Activated CD4-positive, alpha-beta T cell treated with anti-CD3 and anti-CD28 coated beads for 36 hours (primary cell): ENCODE measurements at regions of chr10 and their contacts with region 1.

Region 1: DNA sequence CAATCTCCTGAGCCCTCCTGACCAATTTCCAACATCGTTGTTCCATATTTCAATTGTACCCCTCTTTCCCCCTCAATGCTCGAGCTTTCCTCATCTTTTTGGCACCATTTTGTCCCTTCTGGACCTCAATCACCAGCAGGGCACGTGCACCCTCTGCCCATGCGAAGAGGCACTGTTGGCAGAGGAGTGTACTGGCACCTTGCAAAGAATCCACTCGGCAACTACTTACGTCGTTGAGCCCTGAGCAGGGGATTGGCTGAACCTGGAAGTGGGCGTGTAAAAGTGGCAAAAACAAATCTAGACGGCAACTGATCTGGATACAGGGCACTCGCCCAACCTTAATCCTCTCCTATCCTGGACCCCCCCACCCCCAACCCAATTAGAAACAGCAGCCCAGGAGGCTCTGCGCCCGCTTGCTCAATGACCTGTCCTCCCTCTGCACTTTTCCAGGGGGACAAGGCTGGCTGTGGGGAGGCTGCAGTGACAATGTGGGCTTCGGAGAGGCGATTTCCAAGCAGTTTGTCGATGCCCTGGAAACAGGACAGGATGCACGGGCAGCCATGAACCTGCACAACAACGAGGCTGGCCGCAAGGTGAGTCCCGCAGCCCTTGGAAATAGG is 18.8 kb downstream of the WNT8B start:
- DNase-seq: peak; percentile 92
- ATAC-seq: peak; percentile 96
- H3K4me3 Mint-ChIP-seq: peak overlapping the region; percentile 71
- H3K27ac Mint-ChIP-seq: no peak overlapping the region
- H3K4me1 Mint-ChIP-seq: peaks cover 5% of the 10 kb centered on the region
- H3K27me3 Mint-ChIP-seq: peaks cover 13% of the 10 kb centered on the region

Region 2: DNA sequence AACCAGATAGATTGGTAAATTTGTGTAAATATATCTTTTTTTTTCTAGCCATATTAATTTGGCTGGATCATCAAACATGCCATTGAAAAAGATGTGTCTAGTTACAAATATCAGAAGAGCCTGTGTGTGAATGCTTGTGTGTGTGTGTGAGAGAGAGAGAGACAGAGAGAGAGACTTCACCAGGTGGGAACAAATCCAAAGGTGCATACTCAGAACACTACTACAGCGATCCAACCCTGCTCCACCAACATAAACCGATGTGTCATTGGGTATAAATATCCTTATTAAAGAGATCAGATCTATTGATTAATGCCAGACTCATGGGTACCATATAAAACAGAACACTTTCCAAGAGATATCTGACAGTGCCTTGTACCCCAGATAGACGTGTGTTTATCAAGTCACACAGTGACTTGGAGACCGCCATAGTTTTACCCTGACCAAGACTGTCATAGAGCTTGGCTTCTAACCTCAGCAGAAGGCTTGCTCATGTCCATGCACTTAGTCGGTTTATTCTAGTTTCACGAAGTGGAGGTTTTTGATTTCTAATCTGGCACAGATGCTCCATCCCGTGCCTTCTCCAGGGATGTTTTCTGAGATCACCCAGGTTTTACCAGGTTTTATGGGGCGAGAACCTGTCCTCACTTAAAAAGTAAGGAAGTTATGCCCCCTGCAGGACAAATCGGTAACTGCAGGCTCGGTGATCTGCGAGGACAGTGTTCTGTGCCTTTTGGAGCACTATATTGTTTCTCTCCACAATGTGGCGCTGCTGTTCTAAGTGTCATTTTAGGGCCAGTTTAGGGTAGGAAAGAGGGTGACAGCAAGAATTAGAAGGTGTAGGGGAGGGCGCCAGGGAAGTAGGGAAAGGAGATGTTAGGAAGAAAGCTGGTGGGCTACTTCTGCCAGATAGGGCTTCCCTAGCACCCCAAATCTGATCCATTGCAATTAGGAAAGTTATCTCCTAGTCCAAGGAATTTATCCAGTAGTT is 48.0 kb before region 1 on chr10:
- CTCF ChIA-PET with region 1: interaction called, 21 read pairs
- POLR2A ChIA-PET with region 1: no interaction called
- intact Hi-C with region 1: loop called in 1 of 2 experiments (anchors 1 kb)
- DNase-seq: peak; percentile 98
- ATAC-seq: peak; percentile 98
- H3K4me3 Mint-ChIP-seq: peak overlapping the region; percentile 7
- H3K27ac Mint-ChIP-seq: no peak overlapping the region
- H3K4me1 Mint-ChIP-seq: peaks cover 5% of the 10 kb centered on the region
- H3K27me3 Mint-ChIP-seq: peaks cover 2% of the 10 kb centered on the region

Region 3: DNA sequence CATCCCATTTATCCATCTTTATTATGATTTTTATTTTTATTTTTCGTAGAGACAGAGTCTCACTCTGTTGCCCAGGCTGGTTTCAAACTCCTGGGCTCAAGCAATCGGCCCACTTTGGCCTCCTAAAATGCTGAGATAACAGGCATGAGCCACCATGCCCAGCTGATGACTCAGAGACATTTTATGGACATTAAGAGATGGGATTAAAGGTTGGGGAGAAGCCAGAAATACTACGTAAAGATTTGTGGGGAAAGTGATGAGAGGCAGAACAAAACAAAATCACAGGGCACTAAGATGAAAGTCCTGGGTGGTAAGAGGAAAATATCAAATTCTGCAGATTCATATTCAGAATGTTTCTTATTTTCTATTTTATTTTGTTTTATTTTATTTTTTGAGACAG is 11.2 kb before region 1 on chr10:
- CTCF ChIA-PET with region 1: interaction called, 10 read pairs
- POLR2A ChIA-PET with region 1: no interaction called
- intact Hi-C with region 1: no loop called
- DNase-seq: no peak
- ATAC-seq: no peak
- H3K4me3 Mint-ChIP-seq: no peak overlapping the region
- H3K27ac Mint-ChIP-seq: no peak overlapping the region
- H3K4me1 Mint-ChIP-seq: no peaks in the 10 kb centered on the region
- H3K27me3 Mint-ChIP-seq: peaks cover 2% of the 10 kb centered on the region

Region 4: GRCh38 chr10:100502926-100503494 is 21.4 kb after region 1 on chr10:
- CTCF ChIA-PET with region 1: interaction called, 131 read pairs
- POLR2A ChIA-PET with region 1: no interaction called
- intact Hi-C with region 1: loop called in 1 of 2 experiments (anchors 1 kb)
- DNase-seq: no peak
- ATAC-seq: no peak
- H3K4me3 Mint-ChIP-seq: no peak overlapping the region
- H3K27ac Mint-ChIP-seq: no peak overlapping the region
- H3K4me1 Mint-ChIP-seq: peaks cover 22% of the 10 kb centered on the region
- H3K27me3 Mint-ChIP-seq: no peaks in the 10 kb centered on the region

Region 5: GRCh38 chr10:100529475-100530298 is 48.1 kb after region 1 on chr10 and contains the start of gene NDUFB8:
- CTCF ChIA-PET with region 1: interaction called, 31 read pairs
- POLR2A ChIA-PET with region 1: interaction called, 3 read pairs
- intact Hi-C with region 1: no loop called
- DNase-seq: peak; percentile 93
- ATAC-seq: peak; percentile 72
- H3K4me3 Mint-ChIP-seq: peak within 1 kb of the TSS; percentile 88
- H3K27ac Mint-ChIP-seq: peak within 1 kb of the TSS; percentile 99
- H3K4me1 Mint-ChIP-seq: peaks cover 37% of the 10 kb centered on the region
- H3K27me3 Mint-ChIP-seq: no peaks in the 10 kb centered on the region
- total RNA-seq, gene NDUFB8: 291 to 375 TPM

Region 6: GRCh38 chr10:100728928-100729861 is 247.6 kb after region 1 on chr10:
- CTCF ChIA-PET with region 1: no interaction called
- POLR2A ChIA-PET with region 1: no interaction called
- intact Hi-C with region 1: no loop called
- DNase-seq: peak; percentile 66
- ATAC-seq: peak; percentile 55
- H3K4me3 Mint-ChIP-seq: no peak overlapping the region
- H3K27ac Mint-ChIP-seq: no peak overlapping the region
- H3K4me1 Mint-ChIP-seq: peaks cover 24% of the 10 kb centered on the region
- H3K27me3 Mint-ChIP-seq: peaks cover 78% of the 10 kb centered on the region